PC-9 (cell line): ENCODE measurements at regions of chr11 and their contacts with region 1.

Region 1: GRCh38 chr11:33899383-33900037 is 7.6 kb upstream of the LMO2 start:
- DNase-seq: peak in 1 of 2 experiments; percentile 32
- H3K4me3 ChIP-seq: no peak overlapping the region
- H3K27ac ChIP-seq: no peak overlapping the region
- H3K4me1 ChIP-seq: no peaks in the 10 kb centered on the region
- H3K27me3 ChIP-seq: peaks cover 38% of the 10 kb centered on the region
- CTCF ChIP-seq: no peak

Region 2: DNA sequence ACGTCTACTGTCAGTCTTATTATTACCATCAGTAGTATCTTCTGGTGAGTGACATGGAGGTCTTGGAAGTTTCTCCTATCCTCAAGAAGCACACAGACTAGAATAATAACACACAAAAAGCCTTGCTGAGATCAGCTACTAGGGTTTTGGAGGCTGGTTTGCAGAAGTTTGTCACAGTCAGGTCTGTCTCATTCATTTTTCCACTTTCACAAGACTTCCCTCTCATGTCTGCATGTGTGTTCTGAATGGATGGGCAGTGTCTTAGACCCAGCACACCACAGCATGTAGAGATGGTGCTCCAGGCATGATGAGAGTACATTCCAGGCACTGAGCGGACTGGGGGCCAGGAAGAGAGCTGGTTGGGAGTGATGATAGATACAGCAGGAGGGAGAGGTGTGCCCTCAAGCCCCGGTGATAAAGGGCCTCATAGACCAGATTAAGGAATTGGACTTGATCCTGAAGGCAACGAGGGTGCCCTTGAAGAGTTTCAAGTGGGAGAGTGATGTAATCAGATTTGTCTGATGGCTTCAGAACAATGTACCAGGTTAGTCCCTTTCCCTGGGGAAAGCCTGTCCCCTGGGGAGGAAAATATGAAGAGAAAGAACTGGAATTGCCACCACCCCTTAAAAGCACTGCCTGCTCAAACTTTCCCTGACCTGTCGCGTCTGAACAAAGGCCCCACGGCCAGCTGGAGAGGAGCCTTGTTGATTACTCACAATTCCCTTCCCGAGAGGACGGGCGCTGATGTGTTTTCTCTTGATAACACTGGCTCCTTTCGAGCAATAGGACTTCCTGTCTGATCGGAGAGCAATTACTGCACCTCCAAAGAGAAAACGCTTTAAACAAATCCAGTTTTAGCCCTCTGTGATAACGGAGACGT is 37.5 kb after region 1 on chr11:
- CTCF ChIA-PET with region 1: no interaction called
- POLR2A ChIA-PET with region 1: no interaction called
- intact Hi-C with region 1: loop called (anchors 5 kb)
- DNase-seq: peak in 1 of 2 experiments; percentile 34
- H3K4me3 ChIP-seq: no peak overlapping the region
- H3K27ac ChIP-seq: no peak overlapping the region
- H3K4me1 ChIP-seq: no peaks in the 10 kb centered on the region
- H3K27me3 ChIP-seq: no peaks in the 10 kb centered on the region
- CTCF ChIP-seq: no peak

Region 3: DNA sequence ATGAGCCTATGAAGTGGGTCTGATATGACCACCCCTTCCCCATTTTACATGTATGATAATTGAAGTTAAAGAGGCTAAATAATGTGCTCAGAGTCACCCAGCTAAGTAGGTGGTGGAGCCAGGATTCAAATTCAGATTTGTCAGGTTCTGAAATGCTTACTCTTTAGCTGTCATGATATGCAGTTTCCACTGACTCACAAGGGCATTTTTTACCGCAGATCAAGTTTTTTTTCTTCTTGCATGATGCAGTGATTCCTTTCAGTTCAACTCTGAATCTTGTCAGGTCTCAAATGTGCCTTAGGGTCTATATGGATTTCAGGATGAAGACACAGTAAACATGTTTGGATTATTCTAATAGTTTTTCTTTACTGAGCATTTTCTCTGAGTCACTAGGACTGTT is 1750.5 kb after region 1 on chr11:
- CTCF ChIA-PET with region 1: no interaction called
- POLR2A ChIA-PET with region 1: interaction called, 12 read pairs
- intact Hi-C with region 1: no loop called
- DNase-seq: peak in 1 of 2 experiments; percentile 34
- H3K4me3 ChIP-seq: no peak overlapping the region
- H3K27ac ChIP-seq: no peak overlapping the region
- H3K4me1 ChIP-seq: 0 out of 2 replicates have a peak, but pooled peaks cover 4% of the 10 kb centered on the region
- H3K27me3 ChIP-seq: no peaks in the 10 kb centered on the region
- CTCF ChIP-seq: no peak